ENCODE measurements at regions of chr18 and their contacts with region 1.

Region 1: DNA sequence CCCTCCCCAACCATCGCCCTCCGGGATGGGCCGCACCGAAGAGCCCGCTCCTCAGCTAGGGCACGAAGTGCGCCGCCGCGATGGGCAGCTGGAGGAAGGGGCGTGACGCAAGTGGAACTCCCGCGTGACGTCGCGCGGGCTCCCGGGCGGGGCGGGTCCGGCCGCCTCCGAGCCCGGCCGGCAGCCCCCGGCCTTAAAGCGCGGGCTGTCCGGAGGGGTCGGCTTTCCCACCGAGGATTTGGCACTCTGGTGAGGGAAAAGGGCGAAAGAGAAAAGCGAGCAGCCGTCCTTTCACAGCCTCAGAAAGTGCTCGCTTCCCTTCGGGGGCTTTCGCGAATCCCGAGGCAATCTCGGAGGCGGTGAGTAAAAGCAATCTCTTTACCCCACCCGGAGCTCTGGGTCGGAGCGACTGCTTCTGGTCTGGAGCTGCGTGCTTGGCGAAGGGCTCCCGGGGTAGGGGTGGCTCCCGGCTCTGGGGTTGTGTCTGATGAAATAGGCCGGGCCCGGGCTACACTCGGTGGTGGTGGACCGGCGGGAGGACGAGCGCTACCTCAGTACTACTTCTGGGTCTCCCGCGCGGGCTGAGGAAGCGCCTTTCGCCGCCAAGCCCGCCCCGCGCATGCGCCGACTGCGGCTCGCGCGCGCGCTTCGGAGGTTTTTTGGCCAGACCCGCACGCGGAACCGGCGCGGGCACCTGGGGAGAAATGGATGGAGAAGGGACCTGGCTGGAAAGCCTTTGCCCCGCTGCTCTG is at the start of gene RBBP8:
- DNase-seq: peak; percentile 42
- ATAC-seq: peak; percentile 97
- H3K4me3 ChIP-seq: peak within 1 kb of the TSS; percentile 88 to 89
- H3K27ac ChIP-seq: peak within 1 kb of the TSS; percentile 95
- H3K4me1 ChIP-seq: peaks cover 10% of the 10 kb centered on the region; the same call in 1 of the 2 replicates
- H3K27me3 ChIP-seq: no peaks in the 10 kb centered on the region
- CTCF ChIP-seq: no peak
- total RNA-seq, gene RBBP8: 62.8 TPM

Region 2: DNA sequence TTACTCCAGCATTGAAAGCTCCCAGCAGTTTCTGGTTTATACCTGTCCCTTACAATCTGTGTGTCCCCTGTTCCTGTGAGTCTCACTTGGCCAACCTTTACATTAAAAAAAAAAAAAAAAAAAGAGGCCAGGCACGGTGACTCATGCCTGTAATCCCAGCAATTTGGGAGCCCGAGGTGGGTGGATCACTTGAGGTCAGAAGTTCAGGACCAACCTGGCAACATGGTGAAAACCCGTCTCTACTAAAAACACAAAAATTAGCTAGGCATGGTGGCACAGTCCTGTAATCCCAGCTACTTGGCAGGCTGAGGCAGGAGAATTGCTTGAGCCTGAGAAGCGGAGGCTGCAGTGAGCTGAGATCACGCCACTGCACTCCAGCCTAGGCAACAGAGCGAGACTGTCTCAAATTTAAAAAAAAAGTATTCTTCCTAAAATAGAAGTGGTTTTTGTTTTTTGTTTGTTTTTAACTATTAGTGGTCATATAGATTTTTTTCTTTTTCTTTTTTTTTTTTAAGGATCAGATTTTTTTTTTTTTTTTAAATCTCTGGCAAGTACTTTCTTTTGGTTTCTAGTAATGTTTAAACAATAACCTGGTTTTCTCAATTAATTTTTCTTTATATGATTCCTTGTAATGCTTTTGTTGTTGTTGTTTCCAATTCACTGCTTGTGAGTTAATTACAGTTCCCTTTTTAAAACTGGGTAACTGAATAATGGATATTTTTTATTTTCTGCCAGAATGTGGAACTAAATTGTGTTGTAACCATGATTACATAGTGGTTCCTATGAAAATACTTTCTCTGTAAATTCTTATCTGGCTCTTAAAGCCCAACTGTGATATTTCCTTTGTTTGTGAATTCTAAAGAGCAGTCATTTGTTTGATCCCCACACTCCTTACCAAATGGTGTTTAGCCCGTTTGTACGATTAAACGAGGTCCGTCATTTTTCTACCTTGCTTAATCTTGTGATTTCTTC is 632.4 kb before region 1 on chr18:
- CTCF ChIA-PET with region 1: no interaction called
- POLR2A ChIA-PET with region 1: no interaction called
- in situ Hi-C with region 1: no loop called
- intact Hi-C with region 1: no loop called
- DNase-seq: no peak
- ATAC-seq: no peak
- H3K4me3 ChIP-seq: no peak overlapping the region
- H3K27ac ChIP-seq: no peak overlapping the region
- H3K4me1 ChIP-seq: no peaks in the 10 kb centered on the region
- H3K27me3 ChIP-seq: peaks cover 11% of the 10 kb centered on the region
- CTCF ChIP-seq: no peak

Region 3: DNA sequence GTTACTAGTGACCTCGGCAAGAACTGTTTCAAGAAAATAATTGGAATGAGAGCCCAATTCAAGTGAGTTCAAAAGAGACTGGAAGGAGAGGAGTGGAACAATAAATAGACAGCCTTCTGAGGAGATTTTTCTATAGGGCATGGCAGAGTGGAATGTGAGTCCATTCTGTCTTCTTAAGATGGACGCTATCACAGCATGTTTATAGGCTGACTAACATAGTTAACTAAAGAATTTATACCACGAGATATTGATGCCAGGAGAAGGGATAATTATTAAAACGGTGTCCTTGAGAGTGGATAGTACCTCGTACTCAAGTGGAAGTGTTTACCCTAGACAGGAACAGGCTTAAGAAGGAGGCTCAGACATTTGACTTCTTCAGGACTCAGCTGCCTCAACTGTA is 143.8 kb before region 1 on chr18:
- CTCF ChIA-PET with region 1: no interaction called
- POLR2A ChIA-PET with region 1: no interaction called
- in situ Hi-C with region 1: no loop called
- intact Hi-C with region 1: no loop called
- DNase-seq: no peak
- ATAC-seq: no peak
- H3K4me3 ChIP-seq: no peak overlapping the region
- H3K27ac ChIP-seq: no peak overlapping the region
- H3K4me1 ChIP-seq: no peaks in the 10 kb centered on the region
- H3K27me3 ChIP-seq: peaks cover 2% of the 10 kb centered on the region; the same call in 1 of the 2 replicates
- CTCF ChIP-seq: no peak

Region 4: GRCh38 chr18:22841840-22842239 is 91.5 kb before region 1 on chr18:
- CTCF ChIA-PET with region 1: no interaction called
- POLR2A ChIA-PET with region 1: no interaction called
- in situ Hi-C with region 1: no loop called
- intact Hi-C with region 1: loop called (anchors 5 kb)
- DNase-seq: no peak
- ATAC-seq: no peak
- H3K4me3 ChIP-seq: no peak overlapping the region
- H3K27ac ChIP-seq: no peak overlapping the region
- H3K4me1 ChIP-seq: no peaks in the 10 kb centered on the region
- H3K27me3 ChIP-seq: no peaks in the 10 kb centered on the region
- CTCF ChIP-seq: no peak

Region 5: DNA sequence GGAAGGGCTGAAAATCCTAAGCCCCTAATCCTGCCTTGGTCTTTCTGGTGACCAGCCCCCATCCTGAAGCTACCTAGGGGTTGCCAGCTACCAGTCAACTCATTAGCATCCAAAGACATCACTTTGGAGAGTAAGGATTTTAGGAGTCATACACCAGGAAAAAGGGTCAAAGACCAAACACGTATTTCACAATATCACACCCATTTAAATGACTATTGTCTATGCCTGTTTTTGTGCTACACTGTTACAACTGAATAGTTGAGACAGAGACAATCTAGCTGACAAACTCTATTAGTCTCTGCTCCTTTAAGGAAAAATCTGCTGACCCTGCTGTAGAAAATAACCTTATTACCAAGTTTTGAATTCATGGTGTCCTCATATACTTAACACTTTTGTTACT is 21.2 kb before region 1 on chr18:
- CTCF ChIA-PET with region 1: no interaction called
- POLR2A ChIA-PET with region 1: no interaction called
- in situ Hi-C with region 1: no loop called
- intact Hi-C with region 1: no loop called
- DNase-seq: no peak
- ATAC-seq: no peak
- H3K4me3 ChIP-seq: no peak overlapping the region
- H3K27ac ChIP-seq: no peak overlapping the region
- H3K4me1 ChIP-seq: no peaks in the 10 kb centered on the region
- H3K27me3 ChIP-seq: no peaks in the 10 kb centered on the region
- CTCF ChIP-seq: no peak

Region 6: GRCh38 chr18:22983175-22983574 is 49.8 kb after region 1 on chr18:
- CTCF ChIA-PET with region 1: interaction called, 3 read pairs
- POLR2A ChIA-PET with region 1: no interaction called
- in situ Hi-C with region 1: no loop called
- intact Hi-C with region 1: loop called (anchors 10 kb)
- DNase-seq: peak; percentile 27
- ATAC-seq: peak; percentile 41; the same call in 1 of the 2 replicates
- H3K4me3 ChIP-seq: no peak overlapping the region
- H3K27ac ChIP-seq: no peak overlapping the region
- H3K4me1 ChIP-seq: no peaks in the 10 kb centered on the region
- H3K27me3 ChIP-seq: no peaks in the 10 kb centered on the region
- CTCF ChIP-seq: peak; percentile 42; the same call in 1 of the 2 replicates

Region 7: DNA sequence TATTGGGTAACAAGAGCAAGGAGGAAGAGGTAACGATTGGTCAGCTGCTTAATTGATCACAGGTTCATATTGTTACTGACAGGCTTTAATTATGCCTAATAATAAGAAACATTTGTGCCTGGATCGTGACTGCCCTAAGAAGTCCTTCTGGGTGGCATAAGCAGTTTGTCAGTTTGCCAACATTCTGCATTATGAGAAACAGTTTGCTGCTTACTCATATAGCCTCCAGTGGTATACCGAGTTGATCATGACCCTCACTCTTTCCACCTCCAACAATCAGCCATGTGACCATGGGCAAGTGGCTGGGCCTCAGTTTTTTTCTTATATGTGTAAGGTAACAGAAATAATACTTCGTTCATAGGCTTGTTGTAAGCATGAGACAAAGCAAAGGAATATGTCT is 105.3 kb after region 1 on chr18:
- CTCF ChIA-PET with region 1: no interaction called
- POLR2A ChIA-PET with region 1: no interaction called
- in situ Hi-C with region 1: no loop called
- intact Hi-C with region 1: no loop called
- DNase-seq: no peak
- ATAC-seq: peak; percentile 62; the same call in 1 of the 2 replicates
- H3K4me3 ChIP-seq: no peak overlapping the region
- H3K27ac ChIP-seq: no peak overlapping the region
- H3K4me1 ChIP-seq: no peaks in the 10 kb centered on the region
- H3K27me3 ChIP-seq: no peaks in the 10 kb centered on the region
- CTCF ChIP-seq: no peak

Region 8: GRCh38 chr18:23106580-23106979 is 173.2 kb after region 1 on chr18:
- CTCF ChIA-PET with region 1: no interaction called
- POLR2A ChIA-PET with region 1: interaction called, 17 read pairs
- in situ Hi-C with region 1: no loop called
- intact Hi-C with region 1: no loop called
- DNase-seq: peak; percentile 93
- ATAC-seq: peak; percentile 91
- H3K4me3 ChIP-seq: no peak overlapping the region; a peak in 1 of 4 replicates
- H3K27ac ChIP-seq: peak overlapping the region; percentile 89
- H3K4me1 ChIP-seq: peaks cover 57% of the 10 kb centered on the region
- H3K27me3 ChIP-seq: no peaks in the 10 kb centered on the region
- CTCF ChIP-seq: no peak